SK-N-SH (cell line): ENCODE measurements at regions of chr9 and their contacts with region 1.

Region 1: DNA sequence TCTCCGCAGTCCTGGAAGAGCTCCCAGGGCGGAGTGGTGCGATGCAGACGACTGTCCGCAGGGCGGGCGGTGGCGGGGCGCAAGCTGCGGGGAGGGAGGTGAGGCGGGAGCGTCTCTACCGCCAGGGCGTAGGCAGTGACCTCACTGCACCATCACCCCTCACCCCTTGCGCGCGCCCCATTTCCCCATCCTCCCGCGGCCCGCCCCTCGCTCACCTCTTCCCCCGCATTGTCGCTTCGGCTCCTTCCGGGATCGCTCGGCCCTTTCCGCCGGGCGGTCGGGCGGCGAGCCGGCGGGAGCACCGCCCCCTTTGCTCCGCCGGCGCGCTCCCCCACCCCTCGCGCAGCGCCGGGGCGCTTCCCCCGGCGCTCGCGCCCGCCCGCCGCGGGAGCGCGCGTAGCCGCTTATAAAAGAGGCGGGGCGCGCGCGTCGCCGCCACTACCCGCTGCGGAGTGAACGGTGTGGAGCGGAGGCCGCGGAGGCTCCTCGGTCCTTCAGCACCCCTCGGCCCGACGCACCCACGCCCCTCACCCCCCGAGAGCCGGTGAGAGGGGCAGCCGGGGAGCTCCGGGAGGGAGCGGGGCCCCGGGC is at the start of gene SPTAN1:
- DNase-seq: peak; percentile 99
- H3K4me3 ChIP-seq: peak within 1 kb of the TSS; percentile 85 to 92
- H3K27ac ChIP-seq: peak within 1 kb of the TSS; percentile 76 to 87
- H3K4me1 ChIP-seq: peaks cover 29 to 40% of the 10 kb centered on the region in 2 experiments
- H3K27me3 ChIP-seq: no peaks in the 10 kb centered on the region
- CTCF ChIP-seq: no peak
- EP300 ChIP-seq: peak in 1 of 2 experiments; percentile 14; a peak in 1 of 4 replicates
- RAD21 ChIP-seq: no peak
- polyA plus RNA-seq, gene SPTAN1: 142 and 177 TPM in 2 replicates

Region 2: GRCh38 chr9:128479262-128479661 is 73.0 kb before region 1 on chr9:
- CTCF ChIA-PET with region 1: no interaction called
- POLR2A ChIA-PET with region 1: no interaction called
- DNase-seq: no peak
- H3K4me3 ChIP-seq: no peak overlapping the region
- H3K27ac ChIP-seq: no peak overlapping the region
- H3K4me1 ChIP-seq: no peaks in the 10 kb centered on the region
- H3K27me3 ChIP-seq: no peaks in the 10 kb centered on the region
- CTCF ChIP-seq: no peak
- EP300 ChIP-seq: no peak
- RAD21 ChIP-seq: no peak

Region 3: DNA sequence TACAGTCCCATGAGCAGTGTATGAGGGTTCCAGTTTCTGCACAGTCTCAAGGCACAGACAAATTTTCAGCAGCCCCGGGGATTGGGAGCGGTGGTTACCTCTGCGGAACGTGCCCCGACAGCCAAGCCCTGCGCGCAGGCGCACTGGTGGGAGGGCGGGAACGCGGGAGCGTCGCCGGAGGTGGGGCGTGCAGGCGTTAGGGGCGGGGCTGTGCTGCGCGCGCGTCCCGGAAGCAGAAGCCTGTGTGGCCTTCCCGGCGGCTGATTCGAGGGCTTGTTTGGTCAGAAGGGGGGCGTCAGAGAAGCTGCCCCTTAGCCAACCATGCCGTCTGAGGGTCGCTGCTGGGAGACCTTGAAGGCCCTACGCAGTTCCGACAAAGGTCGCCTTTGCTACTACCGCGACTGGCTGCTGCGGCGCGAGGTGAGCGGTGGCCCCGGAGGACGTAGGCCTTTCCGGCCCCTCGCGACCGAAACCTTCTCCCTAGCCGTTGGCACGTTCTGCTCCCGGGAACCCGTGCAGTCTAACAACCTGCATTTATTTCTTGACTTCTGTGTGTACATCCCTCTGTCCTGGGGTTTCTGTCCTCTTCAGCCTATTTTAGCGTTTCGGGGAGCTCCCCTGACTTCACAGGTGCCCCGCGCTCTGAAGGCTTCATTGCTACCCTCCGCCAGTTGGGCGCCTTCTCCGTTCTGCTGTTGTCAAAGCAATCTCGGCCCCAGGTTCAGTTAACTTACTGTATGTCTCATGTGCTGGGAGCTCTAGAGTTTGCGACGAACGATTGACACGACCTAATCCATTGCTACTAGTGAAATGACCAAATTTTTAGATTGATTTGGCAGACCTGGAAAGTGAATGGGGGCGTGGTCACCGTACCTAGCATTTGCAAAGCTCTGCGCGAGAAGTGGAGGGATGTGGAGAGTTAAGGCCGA is 47.5 kb before region 1 on chr9 and contains the start of gene GLE1:
- CTCF ChIA-PET with region 1: no interaction called
- POLR2A ChIA-PET with region 1: interaction called, 15 read pairs
- DNase-seq: peak; percentile 99
- H3K4me3 ChIP-seq: peak within 1 kb of the TSS; percentile 85 to 95
- H3K27ac ChIP-seq: peak within 1 kb of the TSS; percentile 63 to 73
- H3K4me1 ChIP-seq: peaks cover 0 to 13% of the 10 kb centered on the region in 2 experiments; a peak in 2 of 4 replicates
- H3K27me3 ChIP-seq: no peaks in the 10 kb centered on the region
- CTCF ChIP-seq: no peak
- EP300 ChIP-seq: no peak
- RAD21 ChIP-seq: no peak
- polyA plus RNA-seq, gene GLE1: 13.8 and 15.9 TPM in 2 replicates

Region 4: DNA sequence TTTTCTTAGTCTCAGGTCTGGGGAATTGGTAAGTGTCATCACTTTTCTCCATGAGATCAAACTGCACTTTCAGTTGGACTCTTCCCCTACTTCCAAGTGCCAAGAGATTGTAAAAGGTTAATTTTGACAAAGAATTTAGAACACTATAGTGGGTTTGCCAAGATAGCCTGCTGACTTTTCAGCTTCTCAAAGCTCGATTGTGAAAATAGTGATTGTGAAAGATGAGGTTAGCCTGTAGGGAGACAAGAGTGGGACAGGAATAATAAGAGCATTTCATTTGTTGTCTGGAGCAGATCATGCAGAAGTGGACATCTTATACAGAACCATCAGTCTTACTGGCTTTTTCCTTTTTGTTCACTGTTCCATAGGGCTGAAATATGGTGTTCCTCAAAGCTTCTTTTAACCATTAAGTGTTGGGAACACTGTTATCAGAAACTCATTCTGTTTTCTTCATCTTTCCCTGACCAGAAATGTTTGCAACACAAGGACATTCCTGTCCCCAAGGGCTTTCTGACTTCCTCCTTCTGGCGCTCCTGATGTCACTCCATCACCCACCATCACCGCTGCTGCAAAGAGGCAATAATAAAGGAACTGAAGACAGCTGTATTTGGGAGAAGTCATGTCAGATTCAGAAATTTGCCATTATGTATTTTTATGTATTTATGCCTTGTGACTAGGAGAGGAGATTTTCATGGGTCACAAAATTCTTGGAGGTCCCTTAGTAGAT is 11.5 kb before region 1 on chr9:
- CTCF ChIA-PET with region 1: interaction called, 10 read pairs
- POLR2A ChIA-PET with region 1: interaction called, 8 read pairs
- DNase-seq: no peak
- H3K4me3 ChIP-seq: no peak overlapping the region
- H3K27ac ChIP-seq: no peak overlapping the region
- H3K4me1 ChIP-seq: no peaks in the 10 kb centered on the region
- H3K27me3 ChIP-seq: no peaks in the 10 kb centered on the region
- CTCF ChIP-seq: no peak
- EP300 ChIP-seq: no peak
- RAD21 ChIP-seq: no peak

Region 5: GRCh38 chr9:128588581-128589233 is 36.5 kb after region 1 on chr9:
- CTCF ChIA-PET with region 1: no interaction called
- POLR2A ChIA-PET with region 1: no interaction called
- DNase-seq: no peak
- H3K4me3 ChIP-seq: no peak overlapping the region
- H3K27ac ChIP-seq: no peak overlapping the region
- H3K4me1 ChIP-seq: no peaks in the 10 kb centered on the region
- H3K27me3 ChIP-seq: no peaks in the 10 kb centered on the region
- CTCF ChIP-seq: no peak
- EP300 ChIP-seq: no peak
- RAD21 ChIP-seq: no peak